Activated naive CD4-positive, alpha-beta T cell treated with anti-CD3 and anti-CD28 coated beads for 36 hours (primary cell): ENCODE measurements at regions of chr14 and their contacts with region 1.

Region 1: GRCh38 chr14:64434528-64434927 is 30.8 kb upstream of the AKAP5 start:
- DNase-seq: no peak
- H3K4me3 Mint-ChIP-seq: no peak overlapping the region
- H3K27ac Mint-ChIP-seq: no peak overlapping the region
- H3K4me1 Mint-ChIP-seq: peaks cover 4% of the 10 kb centered on the region
- H3K27me3 Mint-ChIP-seq: no peaks in the 10 kb centered on the region

Region 2: DNA sequence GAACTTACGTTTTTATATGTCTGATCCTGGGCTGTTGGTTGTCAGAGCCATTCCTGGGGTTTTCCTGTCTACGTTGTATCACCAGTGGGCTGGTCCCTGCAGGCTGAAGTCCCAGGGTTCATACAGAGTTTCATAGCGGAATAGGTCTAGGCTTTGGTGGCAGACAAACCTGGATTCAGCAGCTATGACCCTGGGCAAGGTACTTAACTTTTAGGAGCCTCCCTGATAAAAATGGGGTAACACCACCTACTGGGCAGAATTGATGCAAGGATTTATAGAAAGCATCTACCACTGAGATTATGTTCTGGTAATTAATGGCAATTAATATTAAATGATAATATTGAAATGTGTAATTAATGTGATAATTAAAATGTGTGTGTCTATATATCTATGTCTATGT is 440.5 kb before region 1 on chr14:
- CTCF ChIA-PET with region 1: no interaction called
- intact Hi-C with region 1: no loop called
- DNase-seq: peak; percentile 15
- H3K4me3 Mint-ChIP-seq: no peak overlapping the region
- H3K27ac Mint-ChIP-seq: no peak overlapping the region
- H3K4me1 Mint-ChIP-seq: no peaks in the 10 kb centered on the region
- H3K27me3 Mint-ChIP-seq: no peaks in the 10 kb centered on the region

Region 3: DNA sequence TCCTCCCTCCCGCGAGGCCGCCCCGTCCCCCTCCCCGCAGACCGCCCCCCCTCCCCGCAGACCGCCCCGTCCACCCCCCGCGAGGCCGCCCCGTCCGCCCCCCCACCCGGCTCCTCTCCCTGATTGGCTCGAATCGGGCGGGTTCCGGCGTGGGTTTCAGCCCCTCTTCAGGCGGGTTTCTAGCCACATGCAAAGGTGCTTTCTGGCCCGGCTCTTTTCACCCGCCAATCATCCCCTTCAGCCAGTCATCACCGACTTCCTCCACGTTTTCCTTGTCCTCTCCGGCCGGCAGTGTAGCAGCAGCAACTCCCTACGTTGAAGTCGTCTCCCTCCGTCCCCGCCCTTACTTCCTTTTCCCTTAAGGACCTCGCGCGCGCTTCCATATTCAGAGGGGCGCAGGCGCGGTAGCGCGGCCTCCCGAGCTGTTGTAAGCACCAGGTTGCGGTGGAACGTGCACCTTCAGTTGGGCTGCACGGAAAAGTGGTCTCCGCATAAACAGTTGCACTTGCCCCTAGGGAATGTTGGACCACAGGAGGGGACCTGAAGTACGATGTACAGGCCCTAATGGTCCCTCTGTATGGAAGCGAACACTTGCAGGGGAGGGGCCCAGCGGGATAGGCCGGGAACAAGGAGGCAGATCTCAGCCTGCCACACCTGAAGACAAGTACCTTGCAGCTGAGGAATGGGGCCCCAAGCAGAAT is 95.8 kb before region 1 on chr14:
- CTCF ChIA-PET with region 1: interaction called, 12 read pairs
- intact Hi-C with region 1: no loop called
- DNase-seq: peak; percentile 95
- H3K4me3 Mint-ChIP-seq: peak overlapping the region; percentile 92
- H3K27ac Mint-ChIP-seq: peak overlapping the region; percentile 86
- H3K4me1 Mint-ChIP-seq: peaks cover 19% of the 10 kb centered on the region
- H3K27me3 Mint-ChIP-seq: no peaks in the 10 kb centered on the region

Region 4: GRCh38 chr14:64421166-64421565 is 13.4 kb before region 1 on chr14:
- CTCF ChIA-PET with region 1: interaction called, 15 read pairs
- intact Hi-C with region 1: no loop called
- DNase-seq: no peak
- H3K4me3 Mint-ChIP-seq: no peak overlapping the region
- H3K27ac Mint-ChIP-seq: no peak overlapping the region
- H3K4me1 Mint-ChIP-seq: no peaks in the 10 kb centered on the region
- H3K27me3 Mint-ChIP-seq: no peaks in the 10 kb centered on the region

Region 5: GRCh38 chr14:64478634-64479250 is 44.2 kb after region 1 on chr14:
- CTCF ChIA-PET with region 1: interaction called, 22 read pairs
- intact Hi-C with region 1: loop called (anchors 1 kb)
- DNase-seq: no peak
- H3K4me3 Mint-ChIP-seq: no peak overlapping the region
- H3K27ac Mint-ChIP-seq: no peak overlapping the region
- H3K4me1 Mint-ChIP-seq: peaks cover 21% of the 10 kb centered on the region
- H3K27me3 Mint-ChIP-seq: no peaks in the 10 kb centered on the region

Region 6: GRCh38 chr14:64636208-64636979 is 201.9 kb after region 1 on chr14:
- CTCF ChIA-PET with region 1: interaction called, 6 read pairs
- intact Hi-C with region 1: loop called (anchors 1 kb)
- DNase-seq: peak; percentile 81
- H3K4me3 Mint-ChIP-seq: no peak overlapping the region
- H3K27ac Mint-ChIP-seq: no peak overlapping the region
- H3K4me1 Mint-ChIP-seq: no peaks in the 10 kb centered on the region
- H3K27me3 Mint-ChIP-seq: no peaks in the 10 kb centered on the region